HEK293T (cell line): ENCODE measurements at regions of chr5 and their contacts with region 1.

Region 1: GRCh38 chr5:169583424-169584204 is at the start of gene SPDL1:
- DNase-seq: peak; percentile 96

Region 2: DNA sequence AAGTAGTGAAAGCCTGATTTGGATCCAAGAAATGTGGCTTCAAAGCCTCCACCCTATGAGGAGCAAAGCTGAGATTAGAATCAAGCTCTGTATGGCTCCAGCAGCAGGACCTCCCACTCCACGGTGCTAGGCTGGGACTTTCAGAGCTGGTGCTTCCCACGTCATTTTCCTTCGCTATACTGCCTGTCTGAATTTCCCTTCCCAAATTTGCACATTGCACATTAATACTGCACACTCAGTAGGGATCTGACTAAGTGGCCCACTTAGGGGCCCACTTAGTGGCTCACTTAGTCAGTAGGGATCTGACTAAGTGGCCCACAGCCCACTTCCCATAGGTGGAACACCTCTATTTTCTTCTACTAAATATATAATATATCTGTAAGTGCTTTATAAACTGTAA is 14.1 kb before region 1 on chr5:
- CTCF ChIA-PET with region 1: interaction called, 4 read pairs
- POLR2A ChIA-PET with region 1: interaction called, 11 read pairs
- DNase-seq: no peak

Region 3: GRCh38 chr5:169856571-169856970 is 273.0 kb after region 1 on chr5:
- CTCF ChIA-PET with region 1: no interaction called
- POLR2A ChIA-PET with region 1: no interaction called
- DNase-seq: no peak